ENCODE measurements at regions of chr14 and their contacts with region 1.

Region 1: GRCh38 chr14:55373784-55374705 is 37.6 kb downstream of the ATG14 start:
- DNase-seq: peak; percentile 58
- H3K4me3 Mint-ChIP-seq: peak overlapping the region; percentile 45
- H3K27ac Mint-ChIP-seq: peak overlapping the region; percentile 97
- H3K4me1 Mint-ChIP-seq: peaks cover 43% of the 10 kb centered on the region
- H3K27me3 Mint-ChIP-seq: no peaks in the 10 kb centered on the region

Region 2: GRCh38 chr14:55071870-55072640 is 302.0 kb before region 1 on chr14:
- CTCF ChIA-PET with region 1: no interaction called
- intact Hi-C with region 1: loop called (anchors 1 kb)
- DNase-seq: peak; percentile 72
- H3K4me3 Mint-ChIP-seq: peak overlapping the region; percentile 51
- H3K27ac Mint-ChIP-seq: peak overlapping the region; percentile 88
- H3K4me1 Mint-ChIP-seq: peaks cover 31% of the 10 kb centered on the region
- H3K27me3 Mint-ChIP-seq: no peaks in the 10 kb centered on the region

Region 3: GRCh38 chr14:55212634-55213033 is 161.4 kb before region 1 on chr14:
- CTCF ChIA-PET with region 1: interaction called, 3 read pairs
- intact Hi-C with region 1: loop called (anchors 1 kb)
- DNase-seq: no peak
- H3K4me3 Mint-ChIP-seq: no peak overlapping the region
- H3K27ac Mint-ChIP-seq: no peak overlapping the region
- H3K4me1 Mint-ChIP-seq: peaks cover 4% of the 10 kb centered on the region
- H3K27me3 Mint-ChIP-seq: no peaks in the 10 kb centered on the region

Region 4: GRCh38 chr14:55323910-55324309 is 50.1 kb before region 1 on chr14:
- CTCF ChIA-PET with region 1: no interaction called
- intact Hi-C with region 1: no loop called
- DNase-seq: no peak
- H3K4me3 Mint-ChIP-seq: no peak overlapping the region
- H3K27ac Mint-ChIP-seq: no peak overlapping the region
- H3K4me1 Mint-ChIP-seq: peaks cover 39% of the 10 kb centered on the region
- H3K27me3 Mint-ChIP-seq: no peaks in the 10 kb centered on the region

Region 5: DNA sequence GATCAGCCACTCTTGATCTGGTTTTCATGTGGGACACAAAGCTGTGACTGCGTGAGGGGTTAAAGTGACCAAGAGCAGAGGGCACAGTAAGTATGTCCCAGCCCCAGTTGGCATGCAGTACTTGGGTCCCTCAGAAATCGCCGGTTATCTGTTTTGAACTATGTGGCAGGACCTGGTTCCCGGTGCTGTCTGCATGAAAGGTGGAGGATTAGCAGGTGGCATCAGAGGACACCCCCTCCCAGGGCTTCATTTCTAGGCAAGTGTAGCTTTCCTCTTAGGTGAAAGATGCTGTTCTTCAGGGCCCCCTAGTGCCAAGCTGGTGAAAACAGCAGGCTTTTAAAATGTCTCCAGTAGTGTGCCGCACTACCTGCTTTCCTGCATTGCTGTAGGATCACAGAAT is 19.5 kb before region 1 on chr14:
- CTCF ChIA-PET with region 1: interaction called, 16 read pairs
- intact Hi-C with region 1: loop called (anchors 1 kb)
- DNase-seq: peak; percentile 80
- H3K4me3 Mint-ChIP-seq: peak overlapping the region; percentile 20
- H3K27ac Mint-ChIP-seq: peak overlapping the region; percentile 74
- H3K4me1 Mint-ChIP-seq: peaks cover 21% of the 10 kb centered on the region
- H3K27me3 Mint-ChIP-seq: no peaks in the 10 kb centered on the region

Region 6: DNA sequence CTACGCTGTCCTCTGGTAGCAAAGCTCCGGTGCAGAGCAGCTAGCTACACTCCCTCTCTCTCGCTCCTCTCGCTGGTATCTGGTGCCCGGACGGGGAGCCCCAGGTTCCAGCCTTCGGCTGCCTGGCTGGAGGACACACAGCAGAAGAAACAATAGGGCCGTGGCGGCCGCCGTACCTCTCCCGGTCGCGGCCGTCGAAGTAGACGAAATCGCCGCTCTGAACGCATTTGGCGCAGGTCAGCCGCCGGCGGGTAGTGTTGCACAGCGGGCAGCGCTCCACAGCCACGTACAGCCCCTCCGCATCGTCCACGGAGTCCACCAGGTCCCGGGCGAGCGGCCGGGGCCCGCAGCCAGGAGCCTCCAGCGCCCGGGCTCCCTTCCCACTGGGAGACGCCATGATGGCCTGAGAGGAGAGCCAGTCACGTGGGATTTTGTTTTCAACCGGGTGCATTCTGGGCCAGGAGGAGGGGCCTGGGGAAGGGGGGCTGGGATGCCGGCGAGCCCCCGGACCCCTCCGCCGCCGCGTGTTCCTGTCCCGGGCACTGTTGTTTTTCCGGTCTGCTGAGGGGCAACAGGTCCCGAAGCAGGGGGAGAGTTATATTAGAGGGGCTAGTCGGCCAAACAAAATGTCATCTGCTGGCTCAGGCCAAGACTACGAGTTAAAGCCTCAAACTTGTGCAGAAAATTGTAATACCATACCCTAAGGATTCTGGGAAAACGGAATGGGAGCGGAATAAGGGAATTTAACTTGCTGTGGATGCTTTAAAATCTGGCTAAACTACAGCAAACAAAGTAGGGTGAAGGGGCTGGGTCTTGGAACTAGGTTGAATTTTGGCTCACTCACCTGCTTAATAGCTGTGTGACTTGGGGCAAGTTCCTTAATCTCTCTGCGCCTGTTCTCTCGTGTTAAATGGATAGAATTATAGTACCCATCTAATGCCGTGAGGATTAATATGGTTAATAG is 37.7 kb after region 1 on chr14 and contains the start of gene ATG14:
- CTCF ChIA-PET with region 1: interaction called, 6 read pairs
- intact Hi-C with region 1: loop called (anchors 1 kb)
- DNase-seq: peak; percentile 87
- H3K4me3 Mint-ChIP-seq: peak within 1 kb of the TSS; percentile 81
- H3K27ac Mint-ChIP-seq: peak within 1 kb of the TSS; percentile 83
- H3K4me1 Mint-ChIP-seq: peaks cover 33% of the 10 kb centered on the region
- H3K27me3 Mint-ChIP-seq: no peaks in the 10 kb centered on the region
- total RNA-seq, gene ATG14: 4.6 to 4.9 TPM